Gastrocnemius medialis (tissue), 4 donors: ENCODE measurements at regions of chr2 and their contacts with region 1.

Region 1: GRCh38 chr2:101252408-101253012 is at the start of gene CNOT11:
- DNase-seq: peak; percentile 97 to 99
- ATAC-seq: peak; percentile 91 to 93
- H3K4me3 ChIP-seq: peak within 1 kb of the TSS; percentile 72 to 99 (median 84)
- H3K27ac ChIP-seq: peak within 1 kb of the TSS; percentile 81 to 100 (median 94)
- H3K4me1 ChIP-seq: peaks cover 17 to 31% of the 10 kb centered on the region in 2 donors
- H3K27me3 ChIP-seq: no peaks in the 10 kb centered on the region
- CTCF ChIP-seq: no peak
- POLR2A ChIP-seq: peak; percentile 80 to 93
- total RNA-seq, gene CNOT11: 31.2 to 42.0 (median 35.5) TPM

Region 2: GRCh38 chr2:101001691-101002561 is 250.6 kb before region 1 on chr2 and contains the start of gene RPL31:
- in situ Hi-C with region 1: no loop called
- intact Hi-C with region 1: loop called (anchors 1 kb)
- DNase-seq: peak; percentile 95 to 96
- ATAC-seq: peak; percentile 90 to 94
- H3K4me3 ChIP-seq: peak within 1 kb of the TSS; percentile 64 to 97 (median 92)
- H3K27ac ChIP-seq: peak within 1 kb of the TSS; percentile 76 to 91 (median 86)
- H3K4me1 ChIP-seq: peaks cover 14 to 18% of the 10 kb centered on the region in 2 donors
- H3K27me3 ChIP-seq: no peaks in the 10 kb centered on the region
- CTCF ChIP-seq: no peak
- POLR2A ChIP-seq: peak; percentile 79 to 81
- total RNA-seq, gene RPL31: 572 to 825 (median 762) TPM

Region 3: DNA sequence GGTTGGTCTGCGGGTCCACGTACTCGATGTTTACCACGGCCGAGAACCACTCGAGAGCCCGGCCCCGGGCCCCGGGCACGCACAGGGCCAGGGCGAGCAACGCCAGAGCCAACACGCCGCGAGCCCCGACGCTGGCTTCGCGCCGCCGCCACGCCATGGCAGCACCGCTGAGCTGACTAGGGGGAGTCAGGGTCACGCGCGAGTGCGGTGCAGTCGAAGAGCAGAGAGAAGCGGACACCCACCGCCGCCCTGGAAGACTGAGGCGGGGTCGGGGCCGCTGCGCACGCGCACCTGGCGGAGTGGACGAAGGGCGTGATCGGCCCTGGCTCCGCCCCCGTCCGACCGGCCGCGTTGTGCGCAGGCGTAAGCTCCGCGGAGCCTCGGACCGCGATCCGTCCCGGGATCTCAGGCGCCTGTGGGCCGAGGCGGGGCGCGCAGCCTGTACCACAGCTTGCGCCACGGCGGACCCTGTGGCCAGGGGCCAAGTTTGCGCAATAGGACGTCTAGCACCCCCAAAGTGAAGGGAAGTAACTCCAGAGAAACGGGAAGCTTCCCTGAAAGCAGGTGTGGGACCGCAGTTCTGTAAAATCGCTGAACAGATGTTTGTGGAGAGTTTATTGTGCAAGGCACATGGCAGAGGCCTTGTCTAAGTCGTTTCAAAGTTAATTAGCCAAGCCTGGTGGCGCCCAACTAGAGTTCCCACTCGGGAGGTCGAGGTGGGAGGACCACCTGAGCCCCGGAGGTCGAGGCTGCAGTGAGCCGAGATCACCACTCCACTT is 56.1 kb after region 1 on chr2 and contains the start of gene RNF149:
- in situ Hi-C with region 1: loop called in 1 of 4 experiments (anchors 10 kb)
- intact Hi-C with region 1: loop called (anchors 1 kb)
- DNase-seq: peak; percentile 85 to 89
- ATAC-seq: peak; percentile 77 to 86
- H3K4me3 ChIP-seq: peak within 1 kb of the TSS; percentile 81 to 99 (median 90)
- H3K27ac ChIP-seq: peak within 1 kb of the TSS; percentile 89 to 98 (median 94)
- H3K4me1 ChIP-seq: peaks cover 26 to 40% of the 10 kb centered on the region in 2 donors
- H3K27me3 ChIP-seq: no peaks in the 10 kb centered on the region
- CTCF ChIP-seq: peak in 1 of 5 experiments; percentile 6
- POLR2A ChIP-seq: peak; percentile 95 to 96
- total RNA-seq, gene RNF149: 14.7 to 27.7 (median 18.5) TPM